Astrocyte of the cerebellum (primary cell): ENCODE measurements at regions of chr9 and their contacts with region 1.

Region 1: GRCh38 chr9:114666851-114667250 is 9.2 kb upstream of the TEX53 start:
- DNase-seq: no peak
- H3K4me3 ChIP-seq: no peak overlapping the region
- CTCF ChIP-seq: no peak

Region 2: DNA sequence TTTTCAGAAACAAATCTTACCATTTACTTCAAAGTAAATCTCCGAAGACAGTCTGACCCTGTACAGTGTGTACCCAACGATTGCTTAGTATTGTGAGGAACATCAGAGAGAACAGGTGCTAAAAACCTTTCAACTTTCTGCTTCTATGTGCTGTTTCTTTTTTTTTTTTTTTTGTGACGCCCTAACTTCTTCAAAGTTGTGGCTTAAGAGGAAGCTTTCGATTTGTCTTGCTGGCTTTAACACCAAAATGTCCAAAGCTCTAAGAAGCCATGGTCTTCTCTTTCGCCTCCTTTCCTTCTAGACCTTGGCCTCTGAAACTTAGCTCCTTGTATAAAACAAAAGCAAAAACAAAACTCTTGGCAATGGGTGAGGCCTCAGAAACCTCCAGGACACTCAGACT is 262.4 kb after region 1 on chr9:
- in situ Hi-C with region 1: loop called (anchors 5 kb)
- DNase-seq: no peak
- H3K4me3 ChIP-seq: no peak overlapping the region
- CTCF ChIP-seq: no peak

Region 3: DNA sequence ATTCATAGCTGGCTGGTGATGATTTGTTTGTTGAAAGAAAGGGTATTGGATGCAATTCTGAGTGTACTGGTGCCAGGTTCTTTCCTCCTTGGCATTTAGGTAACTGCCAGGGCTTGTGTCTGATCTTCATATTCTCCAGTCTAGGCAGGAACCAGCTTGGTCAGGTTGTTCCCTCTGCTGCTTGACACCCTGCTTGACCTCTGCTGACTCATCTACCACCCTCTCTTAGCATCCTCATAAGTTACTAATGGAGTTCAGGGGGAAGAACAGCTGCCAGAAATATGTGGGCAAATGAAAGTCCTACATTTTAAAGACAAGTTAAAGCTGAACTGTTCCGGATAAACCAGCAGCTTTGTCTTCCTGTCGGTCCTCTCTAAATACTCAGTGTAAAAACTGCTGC is 567.2 kb after region 1 on chr9:
- in situ Hi-C with region 1: no loop called
- DNase-seq: peak; percentile 74
- H3K4me3 ChIP-seq: no peak overlapping the region
- CTCF ChIP-seq: no peak